ENCODE measurements at regions of chr2 and their contacts with region 1.

Region 1: GRCh38 chr2:39719317-39719716 is 53.6 kb downstream of the TMEM178A start:
- DNase-seq: no peak
- ATAC-seq: no peak
- H3K4me3 ChIP-seq: no peak overlapping the region
- H3K27ac ChIP-seq: no peak overlapping the region
- H3K4me1 ChIP-seq: peaks cover 34% of the 10 kb centered on the region
- H3K27me3 ChIP-seq: peaks cover 2 to 37% of the 10 kb centered on the region in 2 experiments; a peak in 4 of 5 replicates
- CTCF ChIP-seq: no peak
- EP300 ChIP-seq: no peak
- POLR2A ChIP-seq: no peak
- RAD21 ChIP-seq: no peak

Region 2: GRCh38 chr2:39127973-39128372 is 591.3 kb before region 1 on chr2:
- CTCF ChIA-PET with region 1: no interaction called
- POLR2A ChIA-PET with region 1: no interaction called
- in situ Hi-C with region 1: no loop called
- intact Hi-C with region 1: no loop called
- DNase-seq: no peak
- ATAC-seq: no peak
- H3K4me3 ChIP-seq: no peak overlapping the region
- H3K27ac ChIP-seq: no peak overlapping the region
- H3K4me1 ChIP-seq: peaks cover 46% of the 10 kb centered on the region
- H3K27me3 ChIP-seq: no peaks in the 10 kb centered on the region; a peak in 1 of 5 replicates
- CTCF ChIP-seq: no peak
- EP300 ChIP-seq: no peak
- POLR2A ChIP-seq: no peak
- RAD21 ChIP-seq: no peak

Region 3: DNA sequence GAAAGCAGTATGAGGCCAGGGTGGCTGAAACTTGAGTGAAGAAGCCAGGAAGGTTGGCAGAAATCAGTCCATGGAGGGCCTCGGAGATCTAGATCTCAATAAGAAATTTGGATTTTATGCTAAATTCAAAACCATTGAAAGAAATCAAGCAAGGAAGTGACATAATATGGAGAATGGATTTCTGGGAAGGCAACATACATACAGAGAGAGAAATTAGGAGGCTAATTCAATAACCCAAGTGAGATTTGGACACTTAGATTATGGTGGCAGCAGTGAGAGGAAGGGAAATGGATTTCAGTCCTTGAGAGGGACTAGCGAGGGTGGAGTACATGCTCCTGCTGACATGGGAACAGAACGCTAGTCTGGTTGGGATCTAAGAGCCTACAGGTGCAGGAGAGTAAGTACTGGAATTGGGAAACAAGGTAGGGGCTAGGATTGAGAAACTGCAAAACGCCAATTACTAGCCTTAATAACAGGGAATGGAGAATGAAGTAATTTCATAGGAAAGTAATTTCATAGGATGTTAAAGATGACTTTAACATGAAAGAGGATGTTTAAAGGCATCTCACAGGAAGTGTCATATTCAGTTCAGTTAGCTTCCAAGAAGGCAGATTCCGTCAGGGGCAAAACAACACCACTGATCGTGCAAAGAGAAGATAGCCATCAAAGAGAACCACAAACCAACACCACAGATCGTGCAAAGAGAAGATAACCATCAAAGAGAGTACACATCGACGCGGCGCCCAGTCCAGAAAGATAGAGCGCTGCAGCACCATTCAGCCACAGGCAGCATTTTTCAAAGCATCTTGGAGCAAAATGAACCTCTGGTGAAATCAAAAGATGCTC is 502.7 kb before region 1 on chr2:
- CTCF ChIA-PET with region 1: no interaction called
- POLR2A ChIA-PET with region 1: no interaction called
- in situ Hi-C with region 1: no loop called
- intact Hi-C with region 1: no loop called
- DNase-seq: peak; percentile 78
- ATAC-seq: peak; percentile 89
- H3K4me3 ChIP-seq: peak overlapping the region in 2 of 3 experiments; percentile 24 to 29; a peak in 3 of 6 replicates
- H3K27ac ChIP-seq: no peak overlapping the region
- H3K4me1 ChIP-seq: peaks cover 39% of the 10 kb centered on the region
- H3K27me3 ChIP-seq: no peaks in the 10 kb centered on the region
- CTCF ChIP-seq: 0 out of 2 replicates have a peak, but pooled peaks have one; percentile 7
- EP300 ChIP-seq: peak; percentile 68 to 98
- POLR2A ChIP-seq: no peak
- RAD21 ChIP-seq: no peak

Region 4: DNA sequence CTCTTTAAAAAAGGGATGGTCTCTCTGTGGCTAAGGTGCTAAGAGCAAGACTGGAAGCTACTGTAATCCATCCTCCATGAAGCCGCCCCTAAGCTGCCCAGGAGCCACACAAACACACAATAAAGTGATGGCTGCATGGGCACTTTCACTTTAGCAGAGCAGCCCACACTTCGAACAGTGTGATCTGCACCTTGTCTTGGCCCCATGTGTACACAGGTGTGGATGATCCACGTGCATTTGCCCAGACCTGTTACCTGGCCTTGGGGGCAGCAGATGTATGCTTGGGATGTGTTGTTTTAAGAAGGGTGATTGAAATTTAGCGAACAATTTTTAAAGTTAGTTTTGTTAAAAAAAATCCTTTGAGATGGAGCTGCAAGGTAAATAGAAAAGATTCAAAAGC is 13.7 kb before region 1 on chr2:
- CTCF ChIA-PET with region 1: no interaction called
- POLR2A ChIA-PET with region 1: no interaction called
- in situ Hi-C with region 1: no loop called
- intact Hi-C with region 1: loop called (anchors 2 kb)
- DNase-seq: no peak
- ATAC-seq: no peak
- H3K4me3 ChIP-seq: no peak overlapping the region
- H3K27ac ChIP-seq: no peak overlapping the region
- H3K4me1 ChIP-seq: peaks cover 28% of the 10 kb centered on the region
- H3K27me3 ChIP-seq: peaks cover 0 to 4% of the 10 kb centered on the region in 2 experiments; a peak in 1 of 5 replicates
- CTCF ChIP-seq: no peak
- EP300 ChIP-seq: no peak
- POLR2A ChIP-seq: no peak
- RAD21 ChIP-seq: no peak